ENCODE measurements at regions of chr3 and their contacts with region 1.

Region 1: DNA sequence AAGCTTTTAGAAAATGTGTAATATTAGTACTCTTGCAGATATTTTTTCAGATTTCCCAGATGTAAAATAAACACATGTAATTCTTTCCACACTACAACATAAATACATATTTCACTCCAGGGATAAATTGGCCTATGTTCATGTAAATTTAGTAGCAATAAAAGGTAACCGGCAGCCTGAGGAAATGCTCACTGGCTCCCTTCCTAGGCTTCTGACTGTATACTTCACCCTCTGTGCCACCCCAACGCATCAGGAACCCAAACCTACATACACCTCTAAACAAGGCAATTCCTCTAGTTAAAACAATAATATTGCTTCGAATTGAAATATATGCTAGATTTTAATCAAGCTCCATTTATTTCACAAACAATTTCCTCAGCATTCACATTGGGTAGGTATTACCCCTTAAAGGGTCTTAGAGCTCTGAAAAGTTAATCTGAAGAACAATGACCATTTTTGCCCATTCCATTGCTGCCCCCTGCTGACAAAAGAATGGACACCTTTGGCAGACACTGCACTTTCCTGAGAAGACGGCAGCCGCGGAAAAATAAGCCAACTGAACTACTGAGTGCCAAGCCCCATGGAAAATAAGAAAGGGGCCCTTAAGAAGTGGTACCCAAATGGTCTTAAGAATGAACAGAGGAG is 212.5 kb downstream of the OSBPL10 start:
- DNase-seq: peak; percentile 63
- ATAC-seq: peak; percentile 58 to 63

Region 2: GRCh38 chr3:30768703-30769685 is 999.6 kb before region 1 on chr3:
- intact Hi-C with region 1: loop called in 1 of 2 experiments (anchors 10 kb)
- DNase-seq: peak; percentile 79
- ATAC-seq: peak; percentile 19 to 41

Region 3: DNA sequence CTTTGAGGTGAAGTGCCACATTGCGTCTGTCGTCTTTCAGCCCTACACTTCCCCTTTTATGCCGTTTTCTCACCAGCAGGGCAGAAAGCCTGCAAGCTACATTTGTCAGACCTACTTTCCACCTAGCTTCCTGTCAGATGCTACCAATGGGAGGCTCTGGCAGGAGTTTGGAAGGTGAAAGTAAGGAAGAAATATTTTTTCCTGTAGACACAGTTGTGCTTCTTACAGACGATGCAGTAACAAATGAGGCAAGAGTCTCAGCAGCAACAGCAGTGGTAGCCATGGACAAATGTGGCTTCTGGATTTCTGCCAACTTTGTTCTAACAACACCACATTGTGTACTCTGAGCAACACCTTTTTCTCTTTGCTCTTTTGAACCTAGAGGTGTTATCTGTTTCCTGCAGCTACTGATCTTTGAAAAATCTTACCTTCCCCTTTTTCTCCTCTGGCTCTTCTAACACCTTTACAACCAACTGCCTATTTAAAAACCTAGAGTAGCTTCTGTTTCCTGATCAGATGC is 306.5 kb before region 1 on chr3:
- intact Hi-C with region 1: no loop called
- DNase-seq: no peak
- ATAC-seq: peak in 1 of 2 donors; percentile 65

Region 4: GRCh38 chr3:31544634-31545033 is 224.0 kb before region 1 on chr3:
- intact Hi-C with region 1: loop called in 1 of 2 experiments (anchors 10 kb)
- DNase-seq: peak; percentile 42
- ATAC-seq: peak; percentile 57 to 78

Region 5: GRCh38 chr3:31550452-31551251 is 217.9 kb before region 1 on chr3:
- intact Hi-C with region 1: loop called (anchors 5 to 10 kb)
- DNase-seq: no peak
- ATAC-seq: peak; percentile 51 to 57

Region 6: GRCh38 chr3:31610700-31611275 is 157.8 kb before region 1 on chr3:
- intact Hi-C with region 1: loop called (anchors 2 to 10 kb)
- DNase-seq: no peak
- ATAC-seq: peak in 1 of 2 donors; percentile 38

Region 7: GRCh38 chr3:32262086-32262600 is 493.5 kb after region 1 on chr3:
- intact Hi-C with region 1: no loop called
- DNase-seq: no peak
- ATAC-seq: no peak